ENCODE measurements at regions of chr2 and their contacts with region 1.

Region 1: GRCh38 chr2:231662028-231662810 is 46.1 kb upstream of the PTMA start:
- DNase-seq: peak; percentile 95
- H3K4me3 ChIP-seq: peak overlapping the region; percentile 46
- H3K27ac ChIP-seq: peak overlapping the region; percentile 61
- H3K27me3 ChIP-seq: no peaks in the 10 kb centered on the region
- CTCF ChIP-seq: no peak

Region 2: GRCh38 chr2:231557571-231558237 is 104.5 kb before region 1 on chr2:
- CTCF ChIA-PET with region 1: no interaction called
- POLR2A ChIA-PET with region 1: no interaction called
- DNase-seq: peak; percentile 68
- H3K4me3 ChIP-seq: no peak overlapping the region
- H3K27ac ChIP-seq: no peak overlapping the region
- H3K27me3 ChIP-seq: no peaks in the 10 kb centered on the region
- CTCF ChIP-seq: peak; percentile 82

Region 3: GRCh38 chr2:231612179-231613053 is 49.8 kb before region 1 on chr2:
- CTCF ChIA-PET with region 1: interaction called, 4 read pairs
- POLR2A ChIA-PET with region 1: interaction called, 27 read pairs
- DNase-seq: peak; percentile 84
- H3K4me3 ChIP-seq: no peak overlapping the region
- H3K27ac ChIP-seq: peak overlapping the region; percentile 96
- H3K27me3 ChIP-seq: no peaks in the 10 kb centered on the region
- CTCF ChIP-seq: peak; percentile 93

Region 4: GRCh38 chr2:231632559-231633142 is 29.6 kb before region 1 on chr2:
- CTCF ChIA-PET with region 1: no interaction called
- POLR2A ChIA-PET with region 1: interaction called, 16 read pairs
- DNase-seq: peak; percentile 77
- H3K4me3 ChIP-seq: no peak overlapping the region
- H3K27ac ChIP-seq: peak overlapping the region; percentile 84
- H3K27me3 ChIP-seq: no peaks in the 10 kb centered on the region
- CTCF ChIP-seq: no peak

Region 5: GRCh38 chr2:231642631-231643494 is 19.4 kb before region 1 on chr2:
- CTCF ChIA-PET with region 1: no interaction called
- POLR2A ChIA-PET with region 1: interaction called, 10 read pairs
- DNase-seq: peak; percentile 63
- H3K4me3 ChIP-seq: peak overlapping the region; percentile 36
- H3K27ac ChIP-seq: peak overlapping the region; percentile 84
- H3K27me3 ChIP-seq: no peaks in the 10 kb centered on the region
- CTCF ChIP-seq: no peak

Region 6: GRCh38 chr2:232389327-232389726 is 727.1 kb after region 1 on chr2:
- CTCF ChIA-PET with region 1: no interaction called
- POLR2A ChIA-PET with region 1: no interaction called
- DNase-seq: no peak
- H3K4me3 ChIP-seq: no peak overlapping the region
- H3K27ac ChIP-seq: no peak overlapping the region
- H3K27me3 ChIP-seq: peaks cover 60% of the 10 kb centered on the region
- CTCF ChIP-seq: no peak

Region 7: GRCh38 chr2:232816657-232817056 is 1154.4 kb after region 1 on chr2:
- CTCF ChIA-PET with region 1: no interaction called
- POLR2A ChIA-PET with region 1: no interaction called
- DNase-seq: no peak
- H3K4me3 ChIP-seq: no peak overlapping the region
- H3K27ac ChIP-seq: no peak overlapping the region
- H3K27me3 ChIP-seq: no peaks in the 10 kb centered on the region
- CTCF ChIP-seq: no peak

Measured in AG04450 (cell line).